ENCODE measurements at regions of chr14 and their contacts with region 1.

Region 1: GRCh38 chr14:57486767-57487379 is 6.8 kb downstream of the CCDC198 start:
- DNase-seq: no peak
- ATAC-seq: peak; percentile 83 to 90 (median 84)
- H3K4me3 ChIP-seq: no peak overlapping the region
- H3K27ac ChIP-seq: no peak overlapping the region
- H3K4me1 ChIP-seq: peaks cover 0 to 15% (median 2%) of the 10 kb centered on the region in 4 donors
- H3K27me3 ChIP-seq: no peaks in the 10 kb centered on the region
- CTCF ChIP-seq: peak; percentile 66 to 78 (median 68)
- POLR2A ChIP-seq: no peak

Region 2: DNA sequence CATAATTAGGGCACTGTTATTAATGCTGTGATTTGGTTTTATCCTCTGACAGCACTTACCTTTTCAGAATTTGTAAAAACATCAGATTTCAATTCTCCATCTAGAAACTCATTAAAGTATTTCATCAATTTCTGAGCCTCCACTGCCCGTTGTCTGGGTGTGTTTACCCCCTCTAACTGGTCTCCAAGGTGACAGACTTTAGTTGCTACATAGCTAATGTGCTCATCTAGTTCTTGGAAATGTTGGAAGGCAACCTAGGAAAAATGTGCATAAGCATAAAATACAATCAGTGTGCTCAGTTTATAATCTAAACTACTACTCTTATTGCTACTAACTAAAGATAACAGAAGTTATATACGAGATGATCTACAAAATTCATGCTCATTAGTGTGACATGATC is 242.8 kb before region 1 on chr14:
- intact Hi-C with region 1: no loop called
- DNase-seq: no peak
- ATAC-seq: no peak
- H3K4me3 ChIP-seq: no peak overlapping the region
- H3K27ac ChIP-seq: no peak overlapping the region
- H3K4me1 ChIP-seq: no peaks in the 10 kb centered on the region
- H3K27me3 ChIP-seq: no peaks in the 10 kb centered on the region
- CTCF ChIP-seq: no peak
- POLR2A ChIP-seq: no peak

Region 3: DNA sequence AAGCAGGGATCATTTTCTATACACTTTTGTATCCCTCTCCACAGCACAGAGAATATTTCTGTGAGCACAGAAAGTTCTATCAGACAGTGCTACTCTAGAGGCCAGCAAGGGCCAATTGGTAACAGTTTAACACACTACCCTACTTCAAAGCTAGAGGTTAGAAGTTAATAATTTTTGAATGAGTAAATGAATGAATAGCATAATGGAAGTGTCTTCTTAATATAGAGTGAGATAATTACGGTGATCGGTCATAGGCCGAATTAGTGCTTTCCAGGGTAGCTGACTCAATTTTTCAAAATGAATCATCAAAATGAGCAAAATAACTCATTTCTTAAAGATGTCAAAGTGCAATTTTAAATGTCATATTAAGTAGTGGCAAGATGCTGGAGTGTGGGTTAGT is 73.8 kb after region 1 on chr14:
- intact Hi-C with region 1: loop called in 1 of 2 experiments (anchors 10 kb)
- DNase-seq: no peak
- ATAC-seq: no peak
- H3K4me3 ChIP-seq: no peak overlapping the region
- H3K27ac ChIP-seq: no peak overlapping the region
- H3K4me1 ChIP-seq: no peaks in the 10 kb centered on the region
- H3K27me3 ChIP-seq: no peaks in the 10 kb centered on the region
- CTCF ChIP-seq: no peak
- POLR2A ChIP-seq: no peak

Region 4: DNA sequence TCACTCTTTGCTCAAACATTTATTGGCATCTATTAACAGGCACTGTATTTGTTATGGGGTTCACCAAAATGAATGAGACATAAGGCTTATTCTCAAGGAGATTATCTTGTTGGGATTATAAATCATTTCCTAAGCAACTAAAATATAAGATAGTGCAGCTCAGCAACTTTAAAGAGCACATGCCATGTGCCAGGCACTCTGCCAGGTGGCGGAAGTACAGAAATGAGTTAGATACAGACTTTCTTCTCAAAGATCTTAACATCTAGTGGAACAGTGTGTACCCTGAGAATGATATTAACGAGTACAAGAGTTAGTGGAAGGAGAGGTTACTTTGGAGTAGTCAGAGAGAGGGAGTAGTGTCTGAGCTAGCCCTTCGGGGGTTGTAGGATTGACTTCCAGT is 880.4 kb after region 1 on chr14:
- intact Hi-C with region 1: no loop called
- DNase-seq: no peak
- ATAC-seq: no peak
- H3K4me3 ChIP-seq: no peak overlapping the region
- H3K27ac ChIP-seq: no peak overlapping the region
- H3K4me1 ChIP-seq: no peaks in the 10 kb centered on the region
- H3K27me3 ChIP-seq: no peaks in the 10 kb centered on the region
- CTCF ChIP-seq: no peak
- POLR2A ChIP-seq: no peak